B cell (primary cell): ENCODE measurements at regions of chr1 and their contacts with region 1.

Region 1: DNA sequence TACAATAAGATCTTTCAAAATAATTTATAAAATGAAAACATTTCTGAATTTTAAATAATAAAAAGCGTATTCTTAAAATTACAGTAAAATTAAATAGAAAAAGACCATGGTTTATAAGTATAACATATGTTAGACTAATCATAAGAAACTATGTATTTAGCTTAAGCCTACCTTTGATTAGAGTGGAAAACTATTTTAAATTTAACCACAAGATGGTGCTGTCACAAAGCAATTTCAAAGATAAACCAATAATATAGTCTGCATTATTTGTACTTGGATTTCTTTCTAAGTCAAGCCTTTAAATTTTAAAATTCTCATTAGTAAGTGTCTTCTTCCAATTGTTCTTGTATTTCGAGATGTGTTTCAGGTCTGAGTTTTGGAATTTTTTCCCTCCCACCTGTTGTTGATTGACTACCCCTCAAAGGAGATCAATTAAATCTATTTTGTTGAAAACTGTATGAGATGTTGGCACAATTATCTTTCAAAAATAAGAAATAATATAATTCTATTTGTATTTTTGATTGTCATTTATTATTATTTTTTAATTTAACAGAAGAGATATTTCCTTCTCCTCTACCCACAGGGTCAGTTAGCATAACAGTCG is 459.8 kb downstream of the KCNT2 start:
- DNase-seq: peak; percentile 9
- ATAC-seq: no peak
- H3K4me3 ChIP-seq: no peak overlapping the region
- H3K4me3 Mint-ChIP-seq: no peak overlapping the region
- H3K27ac ChIP-seq: no peak overlapping the region
- H3K27ac Mint-ChIP-seq: no peak overlapping the region
- H3K4me1 ChIP-seq: no peaks in the 10 kb centered on the region
- H3K4me1 Mint-ChIP-seq: no peaks in the 10 kb centered on the region
- H3K27me3 ChIP-seq: no peaks in the 10 kb centered on the region
- H3K27me3 Mint-ChIP-seq: no peaks in the 10 kb centered on the region
- CTCF ChIP-seq: peak; percentile 75

Region 2: DNA sequence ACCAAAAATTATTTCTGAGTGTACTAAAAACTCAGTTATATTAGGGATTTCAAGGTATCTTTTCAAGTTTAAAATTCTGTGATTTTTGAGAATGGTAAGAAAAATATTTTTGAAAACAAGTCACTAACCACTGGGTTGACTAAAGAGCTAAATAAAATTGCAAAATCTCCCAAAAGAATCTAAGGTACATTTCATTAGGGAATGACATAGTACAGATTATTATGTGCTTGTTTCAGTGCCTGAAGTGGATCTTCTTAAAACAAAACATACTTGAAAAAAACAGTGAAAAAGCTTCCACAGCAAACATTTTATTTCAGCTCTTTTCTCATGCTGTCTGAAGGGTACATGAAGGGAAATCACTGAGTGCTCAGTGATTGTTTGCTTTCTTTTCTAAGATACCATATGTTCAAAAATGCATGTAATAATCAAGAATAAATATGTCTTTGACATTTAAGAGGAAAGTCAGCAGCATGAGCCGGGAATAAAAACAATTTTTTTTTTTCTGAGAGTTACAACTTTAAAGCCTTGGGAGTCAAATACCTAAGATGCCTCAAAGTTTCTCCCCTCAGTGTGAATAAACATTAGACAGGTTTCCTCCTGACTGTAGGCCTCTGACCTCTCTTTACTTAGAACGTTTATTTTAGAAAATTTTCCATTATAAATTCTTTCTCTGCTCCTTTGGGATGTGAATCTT is 259.0 kb after region 1 on chr1:
- CTCF ChIA-PET with region 1: no interaction called
- POLR2A ChIA-PET with region 1: no interaction called
- intact Hi-C with region 1: no loop called
- DNase-seq: no peak
- ATAC-seq: no peak
- H3K4me3 ChIP-seq: no peak overlapping the region
- H3K4me3 Mint-ChIP-seq: no peak overlapping the region
- H3K27ac ChIP-seq: no peak overlapping the region
- H3K27ac Mint-ChIP-seq: no peak overlapping the region
- H3K4me1 ChIP-seq: no peaks in the 10 kb centered on the region
- H3K4me1 Mint-ChIP-seq: no peaks in the 10 kb centered on the region
- H3K27me3 ChIP-seq: no peaks in the 10 kb centered on the region
- H3K27me3 Mint-ChIP-seq: no peaks in the 10 kb centered on the region
- CTCF ChIP-seq: no peak

Region 3: DNA sequence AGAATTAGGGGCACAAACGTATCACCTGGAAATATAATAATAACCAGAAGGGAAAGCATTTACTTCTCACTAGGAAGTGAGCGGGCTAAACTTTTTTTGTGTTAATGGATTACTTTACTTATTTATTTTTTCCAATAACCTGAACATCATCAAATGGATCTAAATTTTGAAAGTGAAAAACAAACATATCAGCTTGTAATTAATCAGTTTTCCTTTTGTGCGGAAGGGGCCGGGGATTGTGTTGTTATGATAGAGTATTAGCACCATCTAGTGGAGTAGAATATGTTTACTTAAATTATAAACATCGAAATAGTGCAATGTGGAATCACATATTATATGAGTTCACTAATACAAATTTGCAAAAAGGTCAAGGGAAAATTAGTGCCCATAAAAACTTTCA is 512.4 kb after region 1 on chr1:
- CTCF ChIA-PET with region 1: interaction called, 12 read pairs
- POLR2A ChIA-PET with region 1: no interaction called
- intact Hi-C with region 1: no loop called
- DNase-seq: peak; percentile 24
- ATAC-seq: no peak
- H3K4me3 ChIP-seq: no peak overlapping the region
- H3K4me3 Mint-ChIP-seq: no peak overlapping the region
- H3K27ac ChIP-seq: no peak overlapping the region
- H3K27ac Mint-ChIP-seq: no peak overlapping the region
- H3K4me1 ChIP-seq: no peaks in the 10 kb centered on the region
- H3K4me1 Mint-ChIP-seq: peaks cover 2% of the 10 kb centered on the region
- H3K27me3 ChIP-seq: no peaks in the 10 kb centered on the region
- H3K27me3 Mint-ChIP-seq: no peaks in the 10 kb centered on the region
- CTCF ChIP-seq: peak; percentile 68